Spleen (tissue), 13 donors: ENCODE measurements at regions of chr12 and their contacts with region 1.

Region 1: DNA sequence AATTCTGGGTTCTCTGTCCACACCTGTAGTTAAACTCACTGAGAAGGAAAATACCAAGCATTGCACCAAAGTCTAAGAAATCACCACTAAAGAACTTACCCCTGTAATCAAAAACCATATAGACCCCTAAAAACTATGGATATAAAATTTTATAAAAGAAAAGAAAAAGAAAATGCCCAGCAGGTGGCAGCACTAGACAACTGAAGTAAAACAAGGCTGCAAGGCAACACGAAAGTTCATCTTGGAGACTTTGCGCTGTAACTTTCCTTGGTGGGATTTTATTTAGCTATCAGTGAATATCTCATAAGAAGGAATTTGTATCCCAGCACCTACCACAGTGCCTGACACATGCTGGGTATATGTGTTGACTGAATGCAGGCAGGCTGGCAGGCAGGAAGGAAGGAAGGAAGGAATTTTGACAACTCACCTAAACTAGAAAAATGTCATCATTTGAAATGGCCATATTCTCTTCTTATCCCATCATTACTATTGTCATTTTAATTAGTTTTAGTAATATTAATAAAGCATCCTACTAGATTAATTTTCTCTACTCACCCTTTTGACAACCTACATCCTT is 68.2 kb upstream of the ETV6 start:
- DNase-seq: no peak
- H3K4me3 ChIP-seq: no peak overlapping the region
- H3K27ac ChIP-seq: no peak overlapping the region
- H3K4me1 ChIP-seq: peaks cover 0 to 46% (median 26%) of the 10 kb centered on the region in 6 donors
- H3K27me3 ChIP-seq: no peaks in the 10 kb centered on the region
- CTCF ChIP-seq: peak; percentile 27 to 66 (median 52)
- POLR2A ChIP-seq: no peak

Region 2: DNA sequence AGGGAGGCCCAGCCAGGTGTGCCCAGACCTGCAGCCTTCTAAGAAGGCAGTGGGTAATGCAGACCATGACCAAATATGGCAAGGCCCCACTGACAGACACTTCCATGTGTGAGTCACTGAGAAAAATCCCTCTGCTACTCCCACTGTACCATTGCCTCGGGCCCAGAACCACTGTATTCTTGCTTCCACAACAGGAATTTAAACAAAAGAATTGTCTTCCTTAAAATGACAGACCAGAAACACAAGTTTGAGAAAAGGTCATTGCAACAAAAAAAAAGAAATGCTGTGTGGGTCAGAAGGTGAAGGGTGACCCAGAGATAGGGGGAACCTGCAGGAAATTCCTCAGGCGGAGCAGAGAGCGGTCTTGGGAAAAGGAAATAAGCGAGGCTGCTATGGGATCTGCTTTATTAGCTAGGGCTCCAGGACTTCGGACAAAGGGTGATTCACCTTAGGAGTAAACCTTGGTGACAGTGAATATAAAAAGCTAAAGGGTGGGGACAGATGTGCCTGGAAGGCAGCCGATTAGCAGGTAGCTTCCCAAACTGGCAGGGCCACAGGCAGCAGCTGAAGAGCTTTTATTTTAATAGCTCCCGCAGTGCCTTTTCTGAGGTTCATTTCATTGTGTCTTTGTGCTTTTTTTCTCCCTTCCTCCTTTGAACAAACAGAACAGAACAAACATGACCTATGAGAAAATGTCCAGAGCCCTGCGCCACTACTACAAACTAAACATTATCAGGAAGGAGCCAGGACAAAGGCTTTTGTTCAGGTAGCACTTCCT is 304.2 kb after region 1 on chr12:
- intact Hi-C with region 1: loop called (anchors 10 kb)
- DNase-seq: no peak
- H3K4me3 ChIP-seq: no peak overlapping the region
- H3K27ac ChIP-seq: peak overlapping the region; percentile 37 to 84 (median 75)
- H3K4me1 ChIP-seq: peaks cover 0 to 59% (median 30%) of the 10 kb centered on the region in 6 donors
- H3K27me3 ChIP-seq: no peaks in the 10 kb centered on the region
- CTCF ChIP-seq: no peak
- POLR2A ChIP-seq: no peak

Region 3: DNA sequence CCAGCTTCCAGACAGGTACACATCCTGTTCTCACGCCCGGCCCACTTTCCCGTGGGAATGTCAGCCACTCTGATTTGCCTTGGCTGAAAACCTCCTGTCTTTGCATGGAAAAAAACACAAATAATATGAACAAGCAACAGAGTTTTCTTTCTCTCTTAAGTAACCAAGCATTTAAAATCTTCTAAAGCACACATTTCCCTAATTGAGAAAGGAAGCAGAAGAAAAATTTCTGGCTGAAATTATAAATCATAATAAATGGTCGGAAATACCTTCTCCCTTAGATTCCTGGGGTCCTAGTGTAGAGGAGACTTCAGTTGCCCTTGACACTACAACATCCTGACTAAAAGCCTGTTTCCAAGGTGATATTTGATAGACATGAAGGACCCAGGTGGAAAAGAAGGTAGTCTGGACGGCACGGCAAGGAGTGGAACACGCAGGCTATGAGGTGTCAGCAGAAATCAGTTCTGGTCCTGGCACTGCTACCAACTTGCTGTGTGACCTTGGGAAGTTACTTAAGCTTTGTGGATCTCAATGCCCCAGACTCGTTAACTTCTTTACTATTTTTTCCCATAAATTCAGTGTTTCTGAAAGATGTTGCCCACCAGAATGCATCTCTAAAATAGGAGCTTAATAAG is 452.4 kb after region 1 on chr12:
- intact Hi-C with region 1: loop called (anchors 2 kb)
- DNase-seq: no peak
- H3K4me3 ChIP-seq: peak overlapping the region in 4 of 8 donors; percentile 35 to 65 (median 42)
- H3K27ac ChIP-seq: peak overlapping the region in 3 of 8 donors; percentile 66 to 79 (median 77)
- H3K4me1 ChIP-seq: peaks cover 10 to 20% (median 16%) of the 10 kb centered on the region in 6 donors
- H3K27me3 ChIP-seq: no peaks in the 10 kb centered on the region
- CTCF ChIP-seq: peak in 3 of 11 experiments; percentile 30 to 35 (median 31)
- POLR2A ChIP-seq: no peak

Region 4: GRCh38 chr12:12327802-12328201 is 746.5 kb after region 1 on chr12:
- intact Hi-C with region 1: loop called (anchors 10 kb)
- DNase-seq: no peak
- H3K4me3 ChIP-seq: no peak overlapping the region
- H3K27ac ChIP-seq: peak overlapping the region in 4 of 8 donors; percentile 5 to 35 (median 14)
- H3K4me1 ChIP-seq: peaks cover 3 to 16% (median 10%) of the 10 kb centered on the region in 6 donors
- H3K27me3 ChIP-seq: no peaks in the 10 kb centered on the region
- CTCF ChIP-seq: peak; percentile 36 to 74 (median 63)
- POLR2A ChIP-seq: no peak